ENCODE measurements at regions of chr1 and their contacts with region 1.

Region 1: GRCh38 chr1:51627678-51628077 is 10.8 kb downstream of the OSBPL9 start:
- DNase-seq: no peak
- H3K4me3 ChIP-seq: no peak overlapping the region
- H3K27ac ChIP-seq: no peak overlapping the region
- H3K4me1 ChIP-seq: no peaks in the 10 kb centered on the region
- H3K27me3 ChIP-seq: no peaks in the 10 kb centered on the region
- CTCF ChIP-seq: peak; percentile 18

Region 2: GRCh38 chr1:51768971-51769588 is 141.4 kb after region 1 on chr1:
- intact Hi-C with region 1: loop called (anchors 10 kb)
- DNase-seq: no peak
- H3K4me3 ChIP-seq: no peak overlapping the region
- H3K27ac ChIP-seq: no peak overlapping the region
- H3K4me1 ChIP-seq: no peaks in the 10 kb centered on the region
- H3K27me3 ChIP-seq: no peaks in the 10 kb centered on the region
- CTCF ChIP-seq: peak; percentile 86

Measured in colonic mucosa (tissue), 4 donors.